Activated CD4-positive, alpha-beta T cell treated with anti-CD3 and anti-CD28 coated beads for 36 hours (primary cell): ENCODE measurements at regions of chr6 and their contacts with region 1.

Region 1: GRCh38 chr6:35710241-35710847 is 21.6 kb upstream of the FKBP5 start:
- DNase-seq: peak; percentile 75
- ATAC-seq: peak; percentile 96
- H3K4me3 Mint-ChIP-seq: peak overlapping the region; percentile 34
- H3K27ac Mint-ChIP-seq: peak overlapping the region; percentile 84
- H3K4me1 Mint-ChIP-seq: peaks cover 29% of the 10 kb centered on the region
- H3K27me3 Mint-ChIP-seq: no peaks in the 10 kb centered on the region

Region 2: GRCh38 chr6:35480169-35480568 is 230.2 kb before region 1 on chr6:
- CTCF ChIA-PET with region 1: no interaction called
- POLR2A ChIA-PET with region 1: interaction called, 14 read pairs
- intact Hi-C with region 1: no loop called
- DNase-seq: no peak
- ATAC-seq: no peak
- H3K4me3 Mint-ChIP-seq: no peak overlapping the region
- H3K27ac Mint-ChIP-seq: no peak overlapping the region
- H3K4me1 Mint-ChIP-seq: no peaks in the 10 kb centered on the region
- H3K27me3 Mint-ChIP-seq: no peaks in the 10 kb centered on the region

Region 3: DNA sequence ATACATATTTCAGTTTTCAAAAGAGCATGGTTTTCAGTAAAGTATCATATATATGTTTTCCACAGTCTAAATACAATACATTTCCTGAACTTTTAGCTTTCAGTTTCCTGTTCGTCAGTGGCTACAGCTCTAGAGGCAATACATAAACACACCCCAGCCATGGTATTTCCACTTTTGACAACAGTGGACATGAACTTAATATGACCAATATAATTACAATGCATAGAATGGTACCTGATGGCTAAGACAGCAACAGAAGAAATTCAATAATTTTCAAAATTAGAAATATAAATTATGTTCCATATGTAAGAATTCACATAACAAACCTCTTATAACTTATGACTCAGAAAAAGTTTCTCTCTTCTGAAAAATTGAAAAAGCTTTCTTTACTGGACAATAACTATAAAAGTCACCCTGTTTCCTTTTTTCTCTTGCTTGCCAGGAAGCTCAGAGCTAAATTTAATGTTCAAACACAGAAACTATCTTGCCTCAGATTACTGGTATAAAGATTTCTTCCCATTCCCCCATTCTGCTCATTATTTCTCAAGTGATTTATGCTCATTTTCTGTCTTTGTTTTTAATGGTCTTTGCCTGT is 40.8 kb before region 1 on chr6:
- CTCF ChIA-PET with region 1: interaction called, 3 read pairs
- POLR2A ChIA-PET with region 1: interaction called, 6 read pairs
- intact Hi-C with region 1: loop called in 1 of 2 experiments (anchors 1 kb)
- DNase-seq: no peak
- ATAC-seq: peak; percentile 60
- H3K4me3 Mint-ChIP-seq: peak overlapping the region; percentile 59
- H3K27ac Mint-ChIP-seq: peak overlapping the region; percentile 87
- H3K4me1 Mint-ChIP-seq: peaks cover 49% of the 10 kb centered on the region
- H3K27me3 Mint-ChIP-seq: no peaks in the 10 kb centered on the region

Region 4: GRCh38 chr6:35678021-35678654 is 32.2 kb before region 1 on chr6:
- CTCF ChIA-PET with region 1: no interaction called
- POLR2A ChIA-PET with region 1: interaction called, 3 read pairs
- intact Hi-C with region 1: loop called in 1 of 2 experiments (anchors 1 kb)
- DNase-seq: no peak
- ATAC-seq: no peak
- H3K4me3 Mint-ChIP-seq: peak overlapping the region; percentile 9
- H3K27ac Mint-ChIP-seq: peak overlapping the region; percentile 78
- H3K4me1 Mint-ChIP-seq: peaks cover 83% of the 10 kb centered on the region
- H3K27me3 Mint-ChIP-seq: no peaks in the 10 kb centered on the region

Region 5: DNA sequence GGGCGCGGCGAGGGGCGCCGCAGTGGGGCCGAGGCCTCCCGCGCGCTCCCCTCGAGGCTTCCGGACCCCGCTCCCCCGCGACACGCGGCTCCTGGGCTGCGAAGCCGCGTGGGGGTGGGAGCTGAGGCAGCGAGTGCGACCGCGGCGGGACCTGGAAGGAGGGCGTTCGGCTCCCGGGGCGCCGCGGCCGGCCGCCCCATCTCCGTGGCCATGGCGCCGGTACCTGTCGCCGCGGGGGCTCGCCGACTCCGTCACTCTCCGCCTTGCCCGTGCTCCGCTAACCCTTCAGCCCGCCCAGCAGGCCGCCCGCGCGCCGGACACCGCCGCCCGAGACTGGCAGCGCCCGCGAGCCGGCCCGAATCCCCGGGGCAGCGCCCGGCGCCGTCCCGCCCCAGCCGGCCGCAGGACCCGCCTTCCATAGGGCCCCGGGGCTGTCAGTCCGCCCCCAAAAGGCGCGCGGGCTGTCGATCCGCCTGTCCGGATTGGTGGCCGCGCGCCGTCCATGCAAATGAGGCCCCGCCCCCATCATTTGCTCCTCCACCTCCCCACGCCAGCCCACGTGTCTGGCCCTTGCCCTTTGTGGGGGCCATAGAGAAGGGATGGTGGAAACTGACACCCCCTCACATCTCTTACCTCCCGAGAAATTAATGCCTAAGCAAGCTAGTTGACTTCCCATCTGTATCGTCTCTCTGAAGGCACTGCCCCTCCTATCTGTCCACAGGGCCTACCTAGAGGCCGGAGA is 21.6 kb before region 1 on chr6 and contains the start of gene FKBP5:
- CTCF ChIA-PET with region 1: interaction called, 12 read pairs
- POLR2A ChIA-PET with region 1: interaction called, 6 read pairs
- intact Hi-C with region 1: loop called (anchors 1 kb)
- DNase-seq: peak; percentile 94
- ATAC-seq: peak; percentile 95
- H3K4me3 Mint-ChIP-seq: peak within 1 kb of the TSS; percentile 93
- H3K27ac Mint-ChIP-seq: peak within 1 kb of the TSS; percentile 93
- H3K4me1 Mint-ChIP-seq: peaks cover 8% of the 10 kb centered on the region
- H3K27me3 Mint-ChIP-seq: no peaks in the 10 kb centered on the region
- total RNA-seq, gene FKBP5: 140 to 141 TPM

Region 6: DNA sequence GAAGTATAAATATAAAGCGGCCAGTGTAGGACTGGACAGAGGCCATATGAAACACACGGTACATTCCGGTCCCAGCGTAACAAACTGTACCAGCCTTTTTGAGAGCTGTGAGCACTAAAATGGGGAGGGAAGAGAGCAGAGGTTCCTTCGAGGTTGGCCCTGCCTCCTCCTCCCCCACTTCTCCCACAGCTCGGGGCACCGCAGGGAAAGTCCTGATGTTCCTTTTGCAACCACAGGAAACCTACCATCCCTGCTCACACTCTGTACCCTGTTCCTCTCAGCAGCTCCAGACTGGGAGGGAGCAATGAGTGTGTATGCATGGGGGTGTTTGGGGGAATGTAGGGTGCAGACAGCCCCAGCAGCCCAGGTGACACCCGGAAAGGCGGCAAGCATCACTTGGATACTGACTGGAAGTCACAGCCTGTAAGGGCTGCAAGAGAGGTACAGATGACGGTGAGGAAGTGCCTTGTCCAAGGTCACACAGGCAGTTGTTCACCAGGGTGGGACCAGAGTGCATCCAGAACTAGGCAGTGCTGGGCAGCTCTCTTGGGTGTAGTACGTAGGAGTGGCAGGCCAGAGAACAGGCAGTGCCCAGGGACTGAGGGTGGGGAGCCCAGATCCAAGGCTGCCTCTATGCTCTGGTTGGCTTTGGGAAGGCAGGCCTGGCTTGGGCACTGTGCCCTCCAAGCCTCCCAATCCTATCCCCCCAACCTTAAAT is 15.5 kb after region 1 on chr6:
- CTCF ChIA-PET with region 1: interaction called, 3 read pairs
- POLR2A ChIA-PET with region 1: interaction called, 7 read pairs
- intact Hi-C with region 1: loop called (anchors 1 to 2 kb)
- DNase-seq: peak; percentile 53
- ATAC-seq: peak; percentile 31
- H3K4me3 Mint-ChIP-seq: peak overlapping the region; percentile 62
- H3K27ac Mint-ChIP-seq: peak overlapping the region; percentile 91
- H3K4me1 Mint-ChIP-seq: peaks cover 82% of the 10 kb centered on the region
- H3K27me3 Mint-ChIP-seq: no peaks in the 10 kb centered on the region

Region 7: DNA sequence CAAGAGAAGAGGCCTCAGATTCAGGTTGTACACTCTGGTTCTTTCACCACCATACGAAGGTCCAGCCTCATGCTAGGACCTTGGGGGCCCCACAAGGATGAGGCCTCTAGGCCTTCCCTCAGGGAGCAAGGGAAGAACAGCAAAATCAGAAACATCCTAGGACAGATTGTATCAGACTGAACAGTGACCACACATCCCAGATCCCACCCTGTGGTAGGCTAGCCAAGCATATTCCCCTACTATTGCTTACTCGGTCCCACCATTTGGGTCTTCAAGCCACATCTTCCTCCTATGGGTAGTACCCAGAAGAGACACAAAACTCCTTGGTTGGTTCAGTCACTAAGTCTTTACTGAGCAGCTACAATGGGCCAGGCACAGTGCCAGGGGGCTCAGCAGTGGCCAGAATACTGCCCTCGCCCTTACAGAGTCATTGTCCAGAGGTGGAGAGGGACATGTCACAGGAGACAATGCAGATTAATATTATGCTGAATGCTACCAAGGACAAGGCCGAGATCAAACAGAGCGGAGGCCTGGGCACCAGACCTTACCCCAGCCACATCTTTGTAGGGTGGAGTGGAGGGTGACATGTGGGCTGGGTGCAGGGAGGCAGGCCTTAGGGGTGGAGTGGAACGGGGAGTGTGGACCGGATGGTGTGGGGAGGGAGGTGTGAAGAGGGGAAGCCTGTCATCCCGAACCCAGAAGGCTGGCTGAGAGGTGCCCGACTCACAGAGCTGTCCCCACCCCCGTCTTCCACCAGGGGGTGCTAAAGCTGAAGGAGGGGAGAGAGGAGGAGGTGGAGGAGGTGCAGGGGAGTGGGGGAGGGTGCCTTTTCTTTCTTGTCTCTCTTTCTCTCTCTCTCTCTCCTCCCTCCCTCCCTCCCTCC is 413.2 kb after region 1 on chr6:
- CTCF ChIA-PET with region 1: no interaction called
- POLR2A ChIA-PET with region 1: interaction called, 16 read pairs
- intact Hi-C with region 1: no loop called
- DNase-seq: peak; percentile 95
- ATAC-seq: peak; percentile 77
- H3K4me3 Mint-ChIP-seq: peak overlapping the region; percentile 27
- H3K27ac Mint-ChIP-seq: peak overlapping the region; percentile 64
- H3K4me1 Mint-ChIP-seq: peaks cover 89% of the 10 kb centered on the region
- H3K27me3 Mint-ChIP-seq: no peaks in the 10 kb centered on the region